CD4-positive, alpha-beta memory T cell (primary cell): ENCODE measurements at regions of chr10 and their contacts with region 1.

Region 1: GRCh38 chr10:13299437-13300287 is at the start of gene PHYH:
- DNase-seq: peak; percentile 80 to 86 (median 82)
- H3K4me3 ChIP-seq: peak within 1 kb of the TSS; percentile 36 to 57
- H3K4me3 Mint-ChIP-seq: peak within 1 kb of the TSS; percentile 85 to 90 (median 86)
- H3K27ac ChIP-seq: peak within 1 kb of the TSS; percentile 88
- H3K27ac Mint-ChIP-seq: peak within 1 kb of the TSS; percentile 88 to 100 (median 96)
- H3K4me1 ChIP-seq: peaks cover 28% of the 10 kb centered on the region
- H3K4me1 Mint-ChIP-seq: peaks cover 8 to 30% (median 20%) of the 10 kb centered on the region in 4 donors
- H3K27me3 ChIP-seq: no peaks in the 10 kb centered on the region
- H3K27me3 Mint-ChIP-seq: no peaks in the 10 kb centered on the region
- total RNA-seq, gene PHYH: 8.7 to 10.2 TPM

Region 2: DNA sequence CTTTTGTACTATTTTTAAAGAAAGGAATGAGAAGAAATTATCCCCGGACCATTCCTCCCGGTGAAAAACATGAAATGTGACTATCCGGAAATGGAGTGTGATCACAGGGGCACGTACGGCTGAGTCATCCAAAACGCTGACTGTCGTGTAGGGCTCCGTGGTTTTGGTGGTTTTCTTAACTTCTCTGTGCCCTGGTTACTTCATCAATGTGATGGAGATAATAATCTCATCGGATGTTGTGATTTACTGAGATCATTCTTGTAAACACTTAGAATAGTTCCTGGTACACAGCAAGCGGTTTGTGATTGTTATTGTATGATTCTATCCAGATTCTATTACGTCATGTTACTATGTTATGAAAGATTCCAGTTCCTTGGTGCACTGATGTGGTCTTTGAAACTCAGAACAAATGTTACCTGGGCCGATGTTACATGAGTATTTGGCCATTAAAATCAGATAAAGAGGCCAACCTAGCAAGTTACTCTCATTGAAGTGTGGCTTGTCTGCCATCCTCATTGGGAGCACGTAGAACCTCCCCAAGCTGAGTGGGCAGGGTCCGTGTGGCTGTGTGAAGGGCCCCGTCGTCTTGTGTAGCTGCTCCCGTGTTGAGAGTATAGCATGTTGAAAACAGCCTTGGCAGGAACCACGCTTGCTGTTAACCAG is 850.8 kb before region 1 on chr10:
- CTCF ChIA-PET with region 1: interaction called, 3 read pairs
- POLR2A ChIA-PET with region 1: no interaction called
- intact Hi-C with region 1: loop called (anchors 5 kb)
- DNase-seq: peak; percentile 87 to 94 (median 92)
- H3K4me3 ChIP-seq: peak overlapping the region in 1 of 2 donors; percentile 21
- H3K4me3 Mint-ChIP-seq: peak overlapping the region; percentile 36 to 88 (median 81)
- H3K27ac ChIP-seq: peak overlapping the region; percentile 60
- H3K27ac Mint-ChIP-seq: peak overlapping the region; percentile 89 to 99 (median 99)
- H3K4me1 ChIP-seq: peaks cover 14% of the 10 kb centered on the region
- H3K4me1 Mint-ChIP-seq: peaks cover 28 to 58% (median 41%) of the 10 kb centered on the region in 4 donors
- H3K27me3 ChIP-seq: no peaks in the 10 kb centered on the region
- H3K27me3 Mint-ChIP-seq: no peaks in the 10 kb centered on the region

Region 3: GRCh38 chr10:12579954-12580858 is 719.5 kb before region 1 on chr10:
- CTCF ChIA-PET with region 1: no interaction called
- POLR2A ChIA-PET with region 1: no interaction called
- intact Hi-C with region 1: no loop called
- DNase-seq: no peak
- H3K4me3 ChIP-seq: no peak overlapping the region
- H3K4me3 Mint-ChIP-seq: no peak overlapping the region
- H3K27ac ChIP-seq: no peak overlapping the region
- H3K27ac Mint-ChIP-seq: peak overlapping the region in 3 of 7 donors; percentile 7 to 59 (median 21)
- H3K4me1 ChIP-seq: no peaks in the 10 kb centered on the region
- H3K4me1 Mint-ChIP-seq: peaks cover 4 to 20% (median 11%) of the 10 kb centered on the region in 4 donors
- H3K27me3 ChIP-seq: no peaks in the 10 kb centered on the region
- H3K27me3 Mint-ChIP-seq: no peaks in the 10 kb centered on the region

Region 4: DNA sequence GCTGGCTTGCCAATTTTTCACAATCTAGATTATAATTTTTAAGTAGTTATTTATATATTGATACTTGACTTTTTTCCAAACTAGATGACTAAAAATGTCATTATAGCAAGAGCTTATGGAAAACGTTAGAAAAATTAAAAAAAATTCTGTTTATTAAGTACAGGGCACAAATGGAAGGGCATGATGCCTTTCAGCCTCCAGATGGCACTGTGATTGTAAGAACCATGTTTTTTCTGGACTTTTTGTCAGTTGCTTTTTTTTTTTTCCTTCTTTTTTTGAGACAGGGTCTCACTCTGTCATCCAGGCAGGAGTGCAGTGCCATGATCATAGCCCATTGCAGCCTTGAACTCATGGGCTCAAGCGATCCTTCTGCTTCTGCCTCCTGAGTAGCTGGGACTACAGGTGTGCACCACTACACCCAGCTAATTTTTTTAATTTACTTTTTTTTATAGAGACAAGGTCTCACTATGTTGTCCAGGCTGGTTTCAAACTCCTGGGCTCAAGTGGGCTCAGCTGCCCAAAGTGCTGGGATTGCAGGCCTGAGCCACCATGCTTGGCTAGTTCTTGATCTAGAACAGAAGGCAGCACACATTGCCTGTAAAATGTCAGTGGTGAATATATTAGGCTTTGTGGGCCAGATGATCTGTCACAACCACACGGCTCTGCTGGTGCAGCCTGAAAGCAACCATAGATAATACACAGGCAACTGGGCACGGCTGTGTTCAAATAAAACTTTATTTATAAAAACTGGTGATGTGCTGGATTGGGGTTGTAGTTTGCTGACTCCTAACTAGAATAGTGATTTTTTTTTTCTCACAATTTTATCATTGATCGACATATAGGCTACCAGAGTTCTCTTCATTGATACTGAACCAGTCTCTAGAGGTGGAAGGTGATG is 92.9 kb before region 1 on chr10:
- CTCF ChIA-PET with region 1: interaction called, 15 read pairs
- POLR2A ChIA-PET with region 1: no interaction called
- intact Hi-C with region 1: loop called (anchors 2 kb)
- DNase-seq: peak in 1 of 5 donors; percentile 2
- H3K4me3 ChIP-seq: no peak overlapping the region
- H3K4me3 Mint-ChIP-seq: no peak overlapping the region
- H3K27ac ChIP-seq: no peak overlapping the region
- H3K27ac Mint-ChIP-seq: no peak overlapping the region
- H3K4me1 ChIP-seq: no peaks in the 10 kb centered on the region
- H3K4me1 Mint-ChIP-seq: no peaks in the 10 kb centered on the region
- H3K27me3 ChIP-seq: no peaks in the 10 kb centered on the region
- H3K27me3 Mint-ChIP-seq: no peaks in the 10 kb centered on the region

Region 5: DNA sequence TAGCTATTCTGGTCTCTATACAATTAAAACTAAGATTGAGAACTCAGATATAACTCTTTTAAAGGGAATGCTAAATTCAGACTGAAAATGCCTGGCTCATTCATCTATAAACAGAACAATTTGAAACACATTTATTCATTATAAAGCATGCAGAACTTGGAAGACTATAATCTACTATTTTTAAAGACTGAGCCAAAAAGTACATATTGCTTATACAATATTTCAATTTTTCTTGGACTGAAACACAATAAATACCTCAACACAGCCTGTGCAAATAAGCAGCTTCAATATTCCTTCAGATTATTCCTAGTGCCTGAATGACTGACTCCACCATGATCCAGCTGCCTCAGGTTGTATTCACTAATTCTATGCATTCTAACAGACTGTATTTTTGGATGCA is 15.7 kb after region 1 on chr10:
- CTCF ChIA-PET with region 1: interaction called, 7 read pairs
- POLR2A ChIA-PET with region 1: interaction called, 10 read pairs
- intact Hi-C with region 1: no loop called
- DNase-seq: no peak
- H3K4me3 ChIP-seq: no peak overlapping the region
- H3K4me3 Mint-ChIP-seq: no peak overlapping the region
- H3K27ac ChIP-seq: no peak overlapping the region
- H3K27ac Mint-ChIP-seq: no peak overlapping the region
- H3K4me1 ChIP-seq: no peaks in the 10 kb centered on the region
- H3K4me1 Mint-ChIP-seq: no peaks in the 10 kb centered on the region
- H3K27me3 ChIP-seq: no peaks in the 10 kb centered on the region
- H3K27me3 Mint-ChIP-seq: no peaks in the 10 kb centered on the region

Region 6: DNA sequence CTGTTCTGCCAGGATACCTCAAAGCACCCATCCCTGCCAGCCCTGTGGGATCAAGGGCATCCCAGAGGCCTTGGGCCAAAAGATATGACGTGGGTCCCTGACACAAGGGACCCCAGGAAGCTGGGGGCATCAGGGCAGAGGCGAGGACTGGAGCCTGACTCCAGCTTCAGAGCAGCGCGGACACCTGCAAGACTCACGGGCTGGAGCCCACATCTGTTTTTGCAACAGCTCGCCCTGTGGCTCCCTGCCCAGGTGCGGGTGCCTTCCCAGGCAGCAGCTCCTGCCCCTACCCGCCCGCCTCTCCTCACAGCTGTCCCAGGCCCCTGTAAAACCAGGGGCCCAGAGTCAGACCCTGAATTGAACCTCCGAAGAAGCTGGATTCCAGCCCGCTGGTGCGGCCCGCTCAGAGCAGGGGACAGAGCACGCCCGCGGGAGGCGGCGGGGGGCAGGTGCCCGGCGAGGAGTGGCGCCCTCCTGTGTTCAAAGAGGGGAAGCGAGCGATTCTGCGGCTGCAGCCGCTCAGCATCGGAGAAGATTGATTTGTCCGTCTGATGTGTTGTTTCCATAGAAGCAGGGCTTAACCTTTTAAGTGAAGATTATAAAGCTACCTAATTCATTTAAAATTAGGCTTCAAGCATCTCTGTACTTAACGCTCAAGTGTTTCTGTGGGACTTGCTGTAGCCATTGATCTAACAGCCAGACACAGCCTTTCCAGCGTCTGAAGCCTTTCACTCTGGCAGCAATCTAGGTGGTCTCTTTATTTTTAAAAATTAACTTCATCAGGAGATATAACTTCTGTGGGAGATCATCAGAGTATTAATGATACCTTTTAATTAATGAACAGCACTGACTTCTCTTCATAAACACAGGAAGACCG is 140.8 kb after region 1 on chr10:
- CTCF ChIA-PET with region 1: interaction called, 13 read pairs
- POLR2A ChIA-PET with region 1: no interaction called
- intact Hi-C with region 1: no loop called
- DNase-seq: peak; percentile 50 to 65 (median 62)
- H3K4me3 ChIP-seq: peak overlapping the region in 1 of 2 donors; percentile 38
- H3K4me3 Mint-ChIP-seq: peak overlapping the region; percentile 27 to 90 (median 74)
- H3K27ac ChIP-seq: no peak overlapping the region
- H3K27ac Mint-ChIP-seq: peak overlapping the region in 2 of 7 donors; percentile 31 to 78
- H3K4me1 ChIP-seq: peaks cover 15% of the 10 kb centered on the region
- H3K4me1 Mint-ChIP-seq: peaks cover 8 to 13% (median 10%) of the 10 kb centered on the region in 4 donors
- H3K27me3 ChIP-seq: peaks cover 30% of the 10 kb centered on the region
- H3K27me3 Mint-ChIP-seq: peaks cover 40 to 42% of the 10 kb centered on the region in 2 donors